ENCODE measurements at regions of chr16 and their contacts with region 1.

Region 1: GRCh38 chr16:30602616-30603277 is 7.4 kb downstream of the ZNF689 start:
- DNase-seq: no peak
- H3K4me3 ChIP-seq: no peak overlapping the region
- H3K27ac ChIP-seq: no peak overlapping the region
- H3K4me1 ChIP-seq: peaks cover 0 to 5% (median 3%) of the 10 kb centered on the region in 4 experiments
- H3K27me3 ChIP-seq: no peaks in the 10 kb centered on the region

Region 2: GRCh38 chr16:30615358-30616091 is 12.8 kb after region 1 on chr16:
- CTCF ChIA-PET with region 1: interaction called, 12 read pairs
- POLR2A ChIA-PET with region 1: interaction called, 6 read pairs
- DNase-seq: peak; percentile 58 to 80 (median 77)
- H3K4me3 ChIP-seq: no peak overlapping the region
- H3K27ac ChIP-seq: no peak overlapping the region
- H3K4me1 ChIP-seq: peaks cover under 1 to 14% (median 7%) of the 10 kb centered on the region in 4 experiments
- H3K27me3 ChIP-seq: no peaks in the 10 kb centered on the region

Measured in common myeloid progenitor, CD34-positive (primary cell).